ENCODE measurements at regions of chr12 and their contacts with region 1.

Region 1: GRCh38 chr12:2974560-2974971 is 15.4 kb downstream of the TEAD4 start:
- DNase-seq: peak in 1 of 2 experiments; percentile 53
- H3K4me3 ChIP-seq: no peak overlapping the region
- H3K27ac ChIP-seq: no peak overlapping the region
- H3K4me1 ChIP-seq: peaks cover 6 to 23% (median 11%) of the 10 kb centered on the region in 4 experiments
- H3K27me3 ChIP-seq: no peaks in the 10 kb centered on the region
- CTCF ChIP-seq: no peak
- EP300 ChIP-seq: no peak
- POLR2A ChIP-seq: peak in 1 of 2 experiments; percentile 21; a peak in 1 of 3 replicates
- RAD21 ChIP-seq: no peak

Region 2: GRCh38 chr12:3004655-3005565 is 30.3 kb after region 1 on chr12:
- CTCF ChIA-PET with region 1: interaction called, 10 read pairs
- POLR2A ChIA-PET with region 1: interaction called, 3 read pairs
- DNase-seq: no peak
- H3K4me3 ChIP-seq: no peak overlapping the region
- H3K27ac ChIP-seq: no peak overlapping the region
- H3K4me1 ChIP-seq: peaks cover 0 to 9% (median 6%) of the 10 kb centered on the region in 4 experiments; a peak in 5 of 7 replicates
- H3K27me3 ChIP-seq: no peaks in the 10 kb centered on the region
- CTCF ChIP-seq: peak; percentile 45 to 73 (median 58)
- EP300 ChIP-seq: no peak
- POLR2A ChIP-seq: no peak
- RAD21 ChIP-seq: peak; percentile 12 to 41; a peak in 2 of 4 replicates